ENCODE measurements at regions of chr3 and their contacts with region 1.

Region 1: GRCh38 chr3:176430244-176431037 is 766.8 kb downstream of the TBL1XR1 start:
- DNase-seq: no peak
- ATAC-seq: peak; percentile 55
- H3K4me3 Mint-ChIP-seq: no peak overlapping the region
- H3K27ac Mint-ChIP-seq: no peak overlapping the region
- H3K4me1 Mint-ChIP-seq: peaks cover 40% of the 10 kb centered on the region
- H3K27me3 Mint-ChIP-seq: no peaks in the 10 kb centered on the region
- CTCF ChIP-seq: peak; percentile 44

Region 2: GRCh38 chr3:175941356-175941755 is 489.1 kb before region 1 on chr3:
- CTCF ChIA-PET with region 1: interaction called, 10 read pairs
- POLR2A ChIA-PET with region 1: no interaction called
- DNase-seq: peak; percentile 62
- ATAC-seq: peak; percentile 70
- H3K4me3 Mint-ChIP-seq: no peak overlapping the region
- H3K27ac Mint-ChIP-seq: peak overlapping the region; percentile 90
- H3K4me1 Mint-ChIP-seq: peaks cover 7% of the 10 kb centered on the region; the same call in 1 of the 2 replicates
- H3K27me3 Mint-ChIP-seq: no peaks in the 10 kb centered on the region; the same call in 1 of the 2 replicates
- CTCF ChIP-seq: peak; percentile 71

Region 3: GRCh38 chr3:176321099-176321498 is 109.3 kb before region 1 on chr3:
- CTCF ChIA-PET with region 1: no interaction called
- POLR2A ChIA-PET with region 1: no interaction called
- DNase-seq: no peak
- ATAC-seq: peak; percentile 75
- H3K4me3 Mint-ChIP-seq: peak overlapping the region; percentile 94
- H3K27ac Mint-ChIP-seq: peak overlapping the region; percentile 94
- H3K4me1 Mint-ChIP-seq: peaks cover 65% of the 10 kb centered on the region
- H3K27me3 Mint-ChIP-seq: no peaks in the 10 kb centered on the region
- CTCF ChIP-seq: no peak

Region 4: DNA sequence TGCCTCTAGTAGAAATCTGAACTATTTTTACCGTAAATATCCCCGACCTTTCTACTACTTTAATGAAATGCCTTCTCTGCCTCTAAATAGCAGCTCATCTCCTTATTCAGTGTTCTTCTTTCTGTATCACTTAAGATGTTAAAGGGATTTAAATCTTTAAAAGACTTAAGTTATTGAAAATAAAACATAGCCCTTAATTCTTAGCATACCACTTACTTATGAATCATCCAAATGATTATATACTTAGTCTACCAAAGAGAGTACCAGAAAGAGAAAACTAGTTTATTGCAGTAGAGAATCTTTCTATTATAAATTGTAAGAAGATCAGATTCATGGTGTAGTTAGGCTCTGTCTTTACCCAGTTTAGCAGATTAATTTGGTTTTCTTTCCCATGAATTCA is 35.2 kb before region 1 on chr3:
- CTCF ChIA-PET with region 1: no interaction called
- POLR2A ChIA-PET with region 1: no interaction called
- DNase-seq: no peak
- ATAC-seq: no peak
- H3K4me3 Mint-ChIP-seq: no peak overlapping the region
- H3K27ac Mint-ChIP-seq: no peak overlapping the region
- H3K4me1 Mint-ChIP-seq: no peaks in the 10 kb centered on the region
- H3K27me3 Mint-ChIP-seq: peaks cover 7% of the 10 kb centered on the region
- CTCF ChIP-seq: no peak